HepG2 (cell line): ENCODE measurements at regions of chr2 and their contacts with region 1.

Region 1: GRCh38 chr2:212364112-212364985 is 174.3 kb downstream of the ERBB4 start:
- DNase-seq: no peak
- ATAC-seq: no peak
- H3K4me3 ChIP-seq: no peak overlapping the region
- H3K27ac ChIP-seq: no peak overlapping the region
- H3K4me1 ChIP-seq: peaks cover 24% of the 10 kb centered on the region
- H3K27me3 ChIP-seq: no peaks in the 10 kb centered on the region
- CTCF ChIP-seq: no peak
- EP300 ChIP-seq: no peak
- POLR2A ChIP-seq: no peak
- RAD21 ChIP-seq: no peak

Region 2: DNA sequence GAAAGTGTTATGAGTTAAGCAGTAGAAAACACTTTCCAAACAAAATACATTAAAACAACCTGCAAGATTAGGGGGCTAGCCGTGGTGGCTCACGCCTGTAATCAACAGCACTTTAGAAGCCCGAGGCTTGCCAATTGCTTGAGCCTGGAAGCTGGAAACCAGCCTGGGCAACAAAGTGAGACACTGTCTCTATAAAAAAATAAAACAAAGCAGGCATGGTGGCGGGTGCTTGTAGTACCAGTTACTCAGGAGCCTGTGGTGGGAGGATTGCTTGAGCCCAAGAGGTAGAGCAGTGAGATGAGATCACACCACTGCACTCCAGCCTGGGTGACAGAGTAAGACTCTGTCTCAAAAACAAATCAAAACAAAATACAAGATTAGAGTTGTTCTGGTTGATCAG is 34.1 kb before region 1 on chr2:
- CTCF ChIA-PET with region 1: no interaction called
- POLR2A ChIA-PET with region 1: no interaction called
- in situ Hi-C with region 1: no loop called
- intact Hi-C with region 1: loop called (anchors 5 kb)
- DNase-seq: no peak
- ATAC-seq: no peak
- H3K4me3 ChIP-seq: no peak overlapping the region
- H3K27ac ChIP-seq: no peak overlapping the region
- H3K4me1 ChIP-seq: peaks cover 12% of the 10 kb centered on the region
- H3K27me3 ChIP-seq: no peaks in the 10 kb centered on the region
- CTCF ChIP-seq: no peak
- EP300 ChIP-seq: no peak
- POLR2A ChIP-seq: no peak
- RAD21 ChIP-seq: no peak

Region 3: GRCh38 chr2:212381428-212382102 is 17.2 kb after region 1 on chr2:
- CTCF ChIA-PET with region 1: no interaction called
- POLR2A ChIA-PET with region 1: no interaction called
- in situ Hi-C with region 1: no loop called
- intact Hi-C with region 1: loop called (anchors 1 kb)
- DNase-seq: no peak
- ATAC-seq: no peak
- H3K4me3 ChIP-seq: no peak overlapping the region
- H3K27ac ChIP-seq: no peak overlapping the region
- H3K4me1 ChIP-seq: no peaks in the 10 kb centered on the region
- H3K27me3 ChIP-seq: no peaks in the 10 kb centered on the region
- CTCF ChIP-seq: no peak
- EP300 ChIP-seq: no peak
- POLR2A ChIP-seq: no peak
- RAD21 ChIP-seq: no peak

Region 4: GRCh38 chr2:212451786-212452231 is 87.5 kb after region 1 on chr2:
- CTCF ChIA-PET with region 1: no interaction called
- POLR2A ChIA-PET with region 1: no interaction called
- in situ Hi-C with region 1: loop called (anchors 10 kb)
- intact Hi-C with region 1: loop called (anchors 1 kb)
- DNase-seq: peak; percentile 99
- ATAC-seq: peak; percentile 99
- H3K4me3 ChIP-seq: peak overlapping the region in 1 of 3 experiments; percentile 1; a peak in 1 of 6 replicates
- H3K27ac ChIP-seq: peak overlapping the region; percentile 49
- H3K4me1 ChIP-seq: peaks cover 52% of the 10 kb centered on the region
- H3K27me3 ChIP-seq: no peaks in the 10 kb centered on the region
- CTCF ChIP-seq: no peak
- EP300 ChIP-seq: peak; percentile 55 to 84; a peak in 3 of 4 replicates
- POLR2A ChIP-seq: no peak
- RAD21 ChIP-seq: no peak